Naive thymus-derived CD4-positive, alpha-beta T cell (primary cell): ENCODE measurements at regions of chr1 and their contacts with region 1.

Region 1: GRCh38 chr1:31891280-31891679 is 46.9 kb downstream of the PTP4A2 start:
- DNase-seq: no peak
- ATAC-seq: no peak
- H3K4me3 ChIP-seq: no peak overlapping the region
- H3K4me3 Mint-ChIP-seq: peak overlapping the region in 2 of 10 donors; percentile 0 to 1
- H3K27ac ChIP-seq: no peak overlapping the region
- H3K27ac Mint-ChIP-seq: peak overlapping the region in 4 of 9 donors; percentile 1 to 98 (median 37)
- H3K4me1 ChIP-seq: peaks cover 13 to 21% of the 10 kb centered on the region in 2 donors
- H3K4me1 Mint-ChIP-seq: peaks cover 14 to 30% (median 21%) of the 10 kb centered on the region in 7 donors
- H3K27me3 ChIP-seq: no peaks in the 10 kb centered on the region
- H3K27me3 Mint-ChIP-seq: no peaks in the 10 kb centered on the region

Region 2: DNA sequence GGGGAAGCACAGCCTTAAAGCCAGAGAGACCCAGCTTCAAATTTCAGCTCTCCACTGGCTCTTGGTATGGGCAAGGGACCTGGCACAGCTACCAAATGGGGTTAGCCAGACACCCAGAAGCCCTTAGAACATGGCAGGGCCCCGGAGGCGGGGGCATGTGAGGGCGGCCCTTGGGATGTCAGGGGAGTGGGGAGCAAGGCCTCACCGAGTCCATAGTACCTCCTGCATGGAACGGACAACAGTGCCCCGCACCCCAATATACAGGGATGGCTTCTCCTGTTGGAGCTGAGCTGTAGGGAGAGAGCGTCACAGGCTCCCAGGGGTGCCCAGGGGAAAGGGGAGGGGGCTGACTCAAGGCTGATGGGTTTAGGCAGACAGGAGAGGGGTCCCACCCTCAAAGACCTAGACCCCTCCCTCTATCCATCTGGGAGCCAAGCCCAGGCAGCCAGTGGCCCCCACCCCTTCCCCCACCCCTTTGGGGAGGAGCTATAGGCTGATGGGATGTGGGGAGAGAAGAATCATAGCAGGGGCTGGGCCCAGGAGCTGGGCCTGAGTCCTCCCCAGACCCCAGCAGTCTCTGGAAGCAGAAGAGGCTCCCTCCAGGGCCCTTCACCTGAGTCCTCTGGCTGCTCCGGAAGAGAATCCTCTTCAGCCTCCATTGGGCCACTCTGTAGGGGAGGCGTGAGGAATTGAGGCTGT is 91.9 kb before region 1 on chr1:
- CTCF ChIA-PET with region 1: no interaction called
- POLR2A ChIA-PET with region 1: no interaction called
- intact Hi-C with region 1: no loop called
- DNase-seq: no peak
- ATAC-seq: no peak
- H3K4me3 ChIP-seq: no peak overlapping the region
- H3K4me3 Mint-ChIP-seq: no peak overlapping the region
- H3K27ac ChIP-seq: no peak overlapping the region
- H3K27ac Mint-ChIP-seq: no peak overlapping the region
- H3K4me1 ChIP-seq: no peaks in the 10 kb centered on the region
- H3K4me1 Mint-ChIP-seq: peaks cover 3 to 27% (median 21%) of the 10 kb centered on the region in 7 donors
- H3K27me3 ChIP-seq: no peaks in the 10 kb centered on the region
- H3K27me3 Mint-ChIP-seq: peaks cover 0 to 26% (median 0%) of the 10 kb centered on the region in 5 donors

Region 3: DNA sequence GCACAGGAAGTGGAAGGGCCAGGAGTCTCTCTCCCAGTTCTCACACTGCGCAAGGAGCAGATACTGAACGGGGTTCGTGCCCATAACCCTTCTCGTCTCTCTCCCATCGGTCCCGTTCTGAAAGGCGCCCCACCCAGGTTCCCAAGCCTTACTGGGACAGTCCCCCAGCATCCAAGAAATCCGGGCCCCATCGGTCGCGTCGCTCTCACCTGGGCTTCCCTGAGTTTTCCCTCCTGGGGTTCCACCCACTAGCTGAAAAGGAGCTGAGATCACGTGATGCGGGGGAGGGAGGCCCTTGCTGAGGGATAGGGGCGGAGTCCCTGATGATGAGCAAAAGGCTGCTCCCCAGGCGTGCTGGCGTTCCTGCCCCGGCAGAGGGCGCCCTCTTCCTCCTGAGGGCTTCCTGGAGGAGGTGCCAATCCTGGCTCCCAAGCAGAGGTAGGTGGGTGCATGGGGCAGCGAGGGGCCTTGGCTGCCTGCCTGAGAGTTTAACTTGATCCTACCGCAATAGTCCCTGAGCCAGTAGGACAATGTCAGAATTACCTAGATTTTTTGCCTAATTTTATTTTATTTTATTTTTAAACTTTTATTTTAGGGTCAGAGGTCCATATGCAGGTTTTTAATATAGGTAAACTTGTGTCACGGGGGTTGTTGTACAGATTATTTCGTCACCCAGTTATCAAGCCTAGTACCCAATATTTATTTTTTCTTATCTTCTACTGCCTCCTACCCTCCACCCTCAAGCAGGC is 75.4 kb before region 1 on chr1 and contains the start of gene SPOCD1:
- CTCF ChIA-PET with region 1: no interaction called
- POLR2A ChIA-PET with region 1: interaction called, 4 read pairs
- intact Hi-C with region 1: loop called in 1 of 2 experiments (anchors 1 kb)
- DNase-seq: peak; percentile 71 to 86 (median 78)
- ATAC-seq: peak; percentile 98
- H3K4me3 ChIP-seq: no peak within 1 kb of the TSS
- H3K4me3 Mint-ChIP-seq: peak within 1 kb of the TSS in 2 of 10 donors; percentile 18 to 41
- H3K27ac ChIP-seq: no peak within 1 kb of the TSS
- H3K27ac Mint-ChIP-seq: peak within 1 kb of the TSS; percentile 33 to 81 (median 48)
- H3K4me1 ChIP-seq: peaks cover 0 to 7% of the 10 kb centered on the region in 2 donors
- H3K4me1 Mint-ChIP-seq: peaks cover 6 to 24% (median 13%) of the 10 kb centered on the region in 7 donors
- H3K27me3 ChIP-seq: no peaks in the 10 kb centered on the region
- H3K27me3 Mint-ChIP-seq: no peaks in the 10 kb centered on the region
- total RNA-seq, gene SPOCD1: 0.21 to 0.38 TPM in 2 of 5 experiments, not detected in the others

Region 4: DNA sequence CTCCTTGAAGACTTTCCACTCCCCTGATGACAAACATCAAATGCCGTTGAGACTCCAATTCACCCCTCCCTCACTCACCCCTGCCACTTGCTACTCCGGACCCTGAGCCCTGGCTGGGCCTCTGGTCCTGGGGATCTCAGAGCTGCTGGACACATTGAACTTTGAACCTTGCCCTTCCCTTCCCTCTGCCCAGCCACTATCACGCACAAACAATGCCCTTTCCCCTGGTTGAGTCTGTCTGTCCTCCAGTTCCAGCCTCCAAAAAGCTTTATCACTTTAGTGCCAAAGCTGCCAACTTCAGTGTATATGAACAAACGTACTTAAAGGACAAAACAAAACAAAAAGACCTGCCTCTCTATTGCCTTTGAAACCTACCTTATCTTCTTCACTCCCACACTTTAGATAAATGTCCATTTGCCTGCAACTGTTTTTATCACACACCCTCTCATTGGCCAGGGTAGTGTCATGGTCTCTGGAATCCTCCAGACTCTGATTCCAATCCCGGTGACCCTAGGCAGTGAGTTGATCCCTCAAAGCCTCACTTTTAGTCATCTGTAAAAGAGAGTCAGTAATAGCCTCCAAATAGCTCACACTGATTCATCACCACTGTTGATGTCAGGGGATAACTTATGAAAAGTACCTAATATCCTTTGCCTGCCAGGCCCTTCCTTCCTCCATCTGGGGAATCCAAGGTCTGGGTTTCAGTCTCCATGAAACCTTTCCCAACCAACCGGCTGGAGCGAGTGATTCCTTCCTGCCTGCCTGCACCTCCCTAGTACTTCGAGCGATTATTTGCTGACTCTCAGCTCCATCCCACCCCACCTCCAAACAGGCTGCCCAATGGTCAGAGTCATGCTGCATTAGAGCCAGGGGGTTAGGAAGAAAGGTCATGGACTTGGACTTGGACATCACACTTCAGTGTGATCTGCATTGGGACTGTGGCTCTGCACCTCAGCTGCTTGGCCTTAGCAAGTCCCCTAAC is 59.6 kb before region 1 on chr1:
- CTCF ChIA-PET with region 1: interaction called, 3 read pairs
- POLR2A ChIA-PET with region 1: interaction called, 5 read pairs
- intact Hi-C with region 1: loop called in 1 of 2 experiments (anchors 1 kb)
- DNase-seq: no peak
- ATAC-seq: no peak
- H3K4me3 ChIP-seq: no peak overlapping the region
- H3K4me3 Mint-ChIP-seq: no peak overlapping the region
- H3K27ac ChIP-seq: no peak overlapping the region
- H3K27ac Mint-ChIP-seq: peak overlapping the region in 2 of 9 donors; percentile 5 to 21
- H3K4me1 ChIP-seq: peaks cover 15 to 25% of the 10 kb centered on the region in 2 donors
- H3K4me1 Mint-ChIP-seq: peaks cover 17 to 55% (median 39%) of the 10 kb centered on the region in 7 donors
- H3K27me3 ChIP-seq: no peaks in the 10 kb centered on the region
- H3K27me3 Mint-ChIP-seq: no peaks in the 10 kb centered on the region

Region 5: GRCh38 chr1:31848381-31848897 is 42.8 kb before region 1 on chr1:
- CTCF ChIA-PET with region 1: no interaction called
- POLR2A ChIA-PET with region 1: interaction called, 6 read pairs
- intact Hi-C with region 1: loop called in 1 of 2 experiments (anchors 2 kb)
- DNase-seq: peak in 8 of 9 donors; percentile 37 to 69 (median 59)
- ATAC-seq: peak; percentile 89
- H3K4me3 ChIP-seq: peak overlapping the region; percentile 50
- H3K4me3 Mint-ChIP-seq: peak overlapping the region; percentile 58 to 97 (median 76)
- H3K27ac ChIP-seq: peak overlapping the region; percentile 69
- H3K27ac Mint-ChIP-seq: peak overlapping the region; percentile 66 to 98 (median 90)
- H3K4me1 ChIP-seq: peaks cover 18 to 48% of the 10 kb centered on the region in 2 donors
- H3K4me1 Mint-ChIP-seq: peaks cover 48 to 77% (median 64%) of the 10 kb centered on the region in 7 donors
- H3K27me3 ChIP-seq: no peaks in the 10 kb centered on the region
- H3K27me3 Mint-ChIP-seq: no peaks in the 10 kb centered on the region

Region 6: DNA sequence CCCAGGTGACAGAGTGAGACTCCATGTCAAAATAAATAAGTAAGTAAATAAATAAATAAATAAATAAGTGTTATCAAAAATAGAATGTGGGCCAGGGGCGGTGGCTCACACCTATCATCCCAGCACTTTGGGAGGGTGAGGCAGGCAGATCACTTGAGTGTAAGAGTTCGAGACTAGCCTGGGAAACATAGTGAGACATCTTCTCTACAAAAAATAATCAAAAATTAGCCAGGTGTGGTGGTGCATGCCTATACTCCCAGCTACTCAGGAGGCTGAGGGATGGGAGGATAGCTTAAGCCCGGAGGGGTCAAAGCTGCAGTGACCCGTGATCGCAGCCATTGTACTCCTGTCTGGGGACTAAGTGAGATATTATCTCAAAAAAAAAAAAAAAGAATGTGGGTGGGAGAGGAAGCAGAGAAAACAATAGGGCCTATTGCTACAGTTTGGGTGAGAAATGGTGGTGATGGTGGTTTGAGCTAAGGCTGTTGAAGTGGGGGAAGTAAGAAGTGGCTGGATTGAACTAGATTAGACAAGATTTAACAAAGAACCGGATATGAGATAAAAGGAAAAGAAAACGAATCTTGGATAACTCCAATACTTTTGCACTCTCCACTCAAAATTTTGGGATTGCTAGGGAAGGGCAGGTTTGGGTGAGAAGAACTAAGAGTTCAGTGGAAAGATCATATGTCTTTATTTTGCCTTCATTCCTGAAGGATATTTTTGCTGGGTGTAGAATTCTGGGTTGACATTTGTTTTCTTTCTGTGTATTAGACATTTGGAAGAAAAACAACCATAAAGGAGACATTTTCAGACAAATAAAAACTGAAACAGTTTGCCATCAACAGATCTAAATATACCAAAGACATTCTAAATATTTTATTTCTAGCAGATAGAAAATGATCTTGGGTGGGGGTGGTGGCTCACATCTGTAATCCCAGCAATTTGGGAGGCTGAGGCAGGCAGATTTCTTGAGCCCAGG is 18.3 kb before region 1 on chr1:
- CTCF ChIA-PET with region 1: no interaction called
- POLR2A ChIA-PET with region 1: interaction called, 7 read pairs
- intact Hi-C with region 1: loop called in 1 of 2 experiments (anchors 2 kb)
- DNase-seq: peak in 5 of 9 donors; percentile 10 to 30 (median 22)
- ATAC-seq: peak; percentile 56
- H3K4me3 ChIP-seq: no peak overlapping the region
- H3K4me3 Mint-ChIP-seq: peak overlapping the region; percentile 17 to 74 (median 50)
- H3K27ac ChIP-seq: no peak overlapping the region
- H3K27ac Mint-ChIP-seq: peak overlapping the region; percentile 63 to 91 (median 75)
- H3K4me1 ChIP-seq: peaks cover 4 to 11% of the 10 kb centered on the region in 2 donors
- H3K4me1 Mint-ChIP-seq: peaks cover 19 to 40% (median 25%) of the 10 kb centered on the region in 7 donors
- H3K27me3 ChIP-seq: no peaks in the 10 kb centered on the region
- H3K27me3 Mint-ChIP-seq: peaks cover 0 to under 1% (median 0%) of the 10 kb centered on the region in 5 donors

Region 7: GRCh38 chr1:31880890-31881687 is 10.2 kb before region 1 on chr1:
- CTCF ChIA-PET with region 1: no interaction called
- POLR2A ChIA-PET with region 1: interaction called, 13 read pairs
- intact Hi-C with region 1: no loop called
- DNase-seq: no peak
- ATAC-seq: no peak
- H3K4me3 ChIP-seq: no peak overlapping the region
- H3K4me3 Mint-ChIP-seq: no peak overlapping the region
- H3K27ac ChIP-seq: no peak overlapping the region
- H3K27ac Mint-ChIP-seq: no peak overlapping the region
- H3K4me1 ChIP-seq: peaks cover 0 to 3% of the 10 kb centered on the region in 2 donors
- H3K4me1 Mint-ChIP-seq: peaks cover 6 to 25% (median 14%) of the 10 kb centered on the region in 7 donors
- H3K27me3 ChIP-seq: no peaks in the 10 kb centered on the region
- H3K27me3 Mint-ChIP-seq: peaks cover 0 to 7% (median 0%) of the 10 kb centered on the region in 5 donors

Region 8: DNA sequence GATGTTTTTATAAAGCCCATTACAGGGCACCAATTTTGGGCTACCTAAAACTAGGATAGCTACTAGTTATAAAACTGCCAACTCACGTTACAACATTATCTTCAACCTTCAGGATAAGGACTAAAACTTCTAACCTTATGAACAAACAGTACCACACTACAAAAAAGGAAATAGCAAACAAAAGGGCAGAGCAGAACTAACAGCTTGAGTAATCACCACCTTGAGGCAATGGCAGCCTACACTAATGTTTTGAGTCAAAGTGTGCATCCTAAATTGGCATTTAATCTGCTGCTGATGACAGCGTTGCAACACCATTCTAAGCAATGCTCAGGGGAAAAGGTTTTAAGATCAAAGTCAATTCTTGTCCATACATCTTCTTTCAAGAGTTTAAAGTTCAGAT is 19.7 kb after region 1 on chr1:
- CTCF ChIA-PET with region 1: interaction called, 4 read pairs
- POLR2A ChIA-PET with region 1: interaction called, 10 read pairs
- intact Hi-C with region 1: no loop called
- DNase-seq: no peak
- ATAC-seq: peak; percentile 41
- H3K4me3 ChIP-seq: no peak overlapping the region
- H3K4me3 Mint-ChIP-seq: peak overlapping the region in 5 of 10 donors; percentile 1 to 43 (median 20)
- H3K27ac ChIP-seq: no peak overlapping the region
- H3K27ac Mint-ChIP-seq: peak overlapping the region; percentile 19 to 78 (median 61)
- H3K4me1 ChIP-seq: peaks cover 27 to 40% of the 10 kb centered on the region in 2 donors
- H3K4me1 Mint-ChIP-seq: peaks cover 34 to 61% (median 58%) of the 10 kb centered on the region in 7 donors
- H3K27me3 ChIP-seq: no peaks in the 10 kb centered on the region
- H3K27me3 Mint-ChIP-seq: no peaks in the 10 kb centered on the region

Region 9: GRCh38 chr1:31984419-31985347 is 93.4 kb after region 1 on chr1:
- CTCF ChIA-PET with region 1: no interaction called
- POLR2A ChIA-PET with region 1: no interaction called
- intact Hi-C with region 1: no loop called
- DNase-seq: peak in 5 of 9 donors; percentile 14 to 41 (median 22)
- ATAC-seq: peak; percentile 58
- H3K4me3 ChIP-seq: no peak overlapping the region
- H3K4me3 Mint-ChIP-seq: peak overlapping the region; percentile 7 to 80 (median 66)
- H3K27ac ChIP-seq: peak overlapping the region; percentile 66
- H3K27ac Mint-ChIP-seq: peak overlapping the region; percentile 57 to 95 (median 91)
- H3K4me1 ChIP-seq: peaks cover 46 to 59% of the 10 kb centered on the region in 2 donors
- H3K4me1 Mint-ChIP-seq: peaks cover 34 to 73% (median 60%) of the 10 kb centered on the region in 7 donors
- H3K27me3 ChIP-seq: no peaks in the 10 kb centered on the region
- H3K27me3 Mint-ChIP-seq: no peaks in the 10 kb centered on the region